PC-3 (cell line): ENCODE measurements at regions of chr3 and their contacts with region 1.

Region 1: GRCh38 chr3:149812606-149813366 is at the start of gene RNF13:
- DNase-seq: peak; percentile 94
- ATAC-seq: peak; percentile 87
- H3K4me3 ChIP-seq: peak within 1 kb of the TSS; percentile 89
- H3K27ac ChIP-seq: peak within 1 kb of the TSS; percentile 91
- H3K4me1 ChIP-seq: peaks cover 40% of the 10 kb centered on the region
- H3K27me3 ChIP-seq: no peaks in the 10 kb centered on the region
- CTCF ChIP-seq: no peak
- total RNA-seq, gene RNF13: 33.8 and 43.1 TPM in 2 replicates

Region 2: GRCh38 chr3:149494022-149494758 is 318.6 kb before region 1 on chr3:
- CTCF ChIA-PET with region 1: no interaction called
- POLR2A ChIA-PET with region 1: interaction called, 7 read pairs
- intact Hi-C with region 1: loop called (anchors 1 kb)
- DNase-seq: peak; percentile 81
- ATAC-seq: peak; percentile 71
- H3K4me3 ChIP-seq: no peak overlapping the region
- H3K27ac ChIP-seq: no peak overlapping the region
- H3K4me1 ChIP-seq: peaks cover 9% of the 10 kb centered on the region
- H3K27me3 ChIP-seq: no peaks in the 10 kb centered on the region
- CTCF ChIP-seq: peak; percentile 87

Region 3: GRCh38 chr3:149512209-149512782 is 300.5 kb before region 1 on chr3:
- CTCF ChIA-PET with region 1: interaction called, 8 read pairs
- POLR2A ChIA-PET with region 1: no interaction called
- intact Hi-C with region 1: loop called (anchors 5 kb)
- DNase-seq: peak; percentile 84
- ATAC-seq: peak; percentile 90
- H3K4me3 ChIP-seq: no peak overlapping the region
- H3K27ac ChIP-seq: no peak overlapping the region
- H3K4me1 ChIP-seq: peaks cover 7% of the 10 kb centered on the region; the same call in 1 of the 2 replicates
- H3K27me3 ChIP-seq: no peaks in the 10 kb centered on the region
- CTCF ChIP-seq: peak; percentile 98

Region 4: GRCh38 chr3:149765762-149766334 is 46.9 kb before region 1 on chr3:
- CTCF ChIA-PET with region 1: interaction called, 101 read pairs
- POLR2A ChIA-PET with region 1: no interaction called
- intact Hi-C with region 1: loop called (anchors 1 kb)
- DNase-seq: peak; percentile 59
- ATAC-seq: peak; percentile 59
- H3K4me3 ChIP-seq: no peak overlapping the region
- H3K27ac ChIP-seq: no peak overlapping the region
- H3K4me1 ChIP-seq: no peaks in the 10 kb centered on the region
- H3K27me3 ChIP-seq: 0 out of 2 replicates have a peak, but pooled peaks cover 4% of the 10 kb centered on the region
- CTCF ChIP-seq: peak; percentile 74

Region 5: GRCh38 chr3:149771652-149772271 is 41.0 kb before region 1 on chr3:
- CTCF ChIA-PET with region 1: interaction called, 101 read pairs
- POLR2A ChIA-PET with region 1: no interaction called
- intact Hi-C with region 1: no loop called
- DNase-seq: peak; percentile 75
- ATAC-seq: peak; percentile 83
- H3K4me3 ChIP-seq: no peak overlapping the region
- H3K27ac ChIP-seq: no peak overlapping the region
- H3K4me1 ChIP-seq: no peaks in the 10 kb centered on the region
- H3K27me3 ChIP-seq: no peaks in the 10 kb centered on the region
- CTCF ChIP-seq: peak; percentile 88

Region 6: DNA sequence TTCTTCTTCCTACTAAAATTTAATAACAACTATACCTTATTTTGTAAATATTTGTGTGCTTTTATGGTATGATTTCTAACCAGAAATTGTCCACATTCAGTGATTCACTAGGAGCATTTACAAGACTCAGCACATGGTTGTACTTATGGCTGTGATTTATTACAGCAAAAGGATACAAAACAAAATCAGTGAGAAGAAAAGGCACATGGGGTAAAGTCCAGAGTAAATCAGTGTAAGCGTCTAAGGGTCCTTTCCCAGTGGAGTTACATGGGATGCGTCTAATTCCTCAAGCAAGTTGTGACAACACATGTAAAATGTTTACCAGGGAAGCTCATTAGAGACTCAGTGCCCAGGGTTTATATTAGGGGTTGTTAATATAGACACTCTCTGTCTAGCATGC is 31.3 kb after region 1 on chr3:
- CTCF ChIA-PET with region 1: interaction called, 3 read pairs
- POLR2A ChIA-PET with region 1: interaction called, 3 read pairs
- intact Hi-C with region 1: loop called (anchors 2 kb)
- DNase-seq: no peak
- ATAC-seq: no peak
- H3K4me3 ChIP-seq: no peak overlapping the region
- H3K27ac ChIP-seq: no peak overlapping the region
- H3K4me1 ChIP-seq: peaks cover 21% of the 10 kb centered on the region
- H3K27me3 ChIP-seq: no peaks in the 10 kb centered on the region
- CTCF ChIP-seq: no peak